MCF 10A (cell line): ENCODE measurements at regions of chr5 and their contacts with region 1.

Region 1: GRCh38 chr5:132238169-132238744 is 10.6 kb upstream of the P4HA2 start:
- DNase-seq: peak; percentile 80
- H3K4me3 Mint-ChIP-seq: no peak overlapping the region
- H3K27ac Mint-ChIP-seq: no peak overlapping the region
- H3K4me1 Mint-ChIP-seq: peaks cover under 1% of the 10 kb centered on the region
- H3K27me3 Mint-ChIP-seq: no peaks in the 10 kb centered on the region
- CTCF ChIP-seq: peak; percentile 96

Region 2: DNA sequence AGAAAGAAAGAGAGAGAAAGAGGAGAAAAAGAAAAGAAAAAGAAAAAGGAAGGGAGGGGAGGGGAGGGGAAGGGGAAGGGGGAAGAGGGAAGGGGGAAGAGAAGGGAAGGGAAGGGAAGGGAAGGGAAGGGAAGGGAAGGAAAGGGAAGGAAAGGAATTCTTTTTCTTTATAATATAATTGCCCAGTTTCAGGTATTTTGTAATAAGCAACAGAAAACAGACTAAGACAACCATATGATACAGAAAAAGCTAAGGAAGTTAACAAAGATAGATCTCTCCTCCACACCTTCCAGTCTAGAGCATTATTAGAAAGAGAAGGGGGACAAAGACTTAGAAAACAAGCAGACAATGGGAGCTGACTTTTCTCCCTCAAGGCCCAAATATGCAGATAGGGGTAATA is 323.8 kb before region 1 on chr5:
- CTCF ChIA-PET with region 1: no interaction called
- POLR2A ChIA-PET with region 1: no interaction called
- intact Hi-C with region 1: no loop called
- DNase-seq: no peak
- H3K4me3 Mint-ChIP-seq: no peak overlapping the region
- H3K27ac Mint-ChIP-seq: no peak overlapping the region
- H3K4me1 Mint-ChIP-seq: no peaks in the 10 kb centered on the region
- H3K27me3 Mint-ChIP-seq: peaks cover 87% of the 10 kb centered on the region
- CTCF ChIP-seq: no peak

Region 3: DNA sequence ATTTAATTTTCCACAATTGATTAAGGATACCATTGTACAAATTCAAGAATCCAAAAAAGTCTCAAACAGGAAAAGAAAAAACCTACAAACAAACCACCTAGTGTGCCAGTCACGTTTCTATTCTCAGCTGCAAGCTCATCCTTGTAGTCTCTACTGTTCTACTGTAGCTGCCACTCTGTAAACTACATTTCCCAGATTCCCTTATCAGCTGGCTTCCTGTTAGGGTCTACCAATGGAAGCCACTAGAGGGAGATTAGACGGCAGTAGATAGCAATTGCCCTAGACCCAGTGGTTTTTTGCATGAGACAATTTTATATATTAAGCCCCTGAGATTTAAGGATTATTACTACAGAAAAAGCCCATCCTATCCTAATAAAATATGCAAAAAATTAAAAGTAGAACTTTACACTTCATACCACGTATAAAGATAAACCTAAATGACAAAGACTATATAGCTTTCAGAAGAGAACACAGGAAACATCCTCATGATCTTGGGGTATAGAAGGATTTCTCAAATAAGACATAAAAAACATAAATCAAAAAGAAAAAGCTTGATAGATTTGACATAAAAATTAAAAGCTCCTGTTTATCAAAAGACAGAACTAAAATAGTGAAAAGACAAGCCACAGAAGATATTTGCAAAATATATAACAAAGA is 48.0 kb before region 1 on chr5:
- CTCF ChIA-PET with region 1: interaction called, 16 read pairs
- POLR2A ChIA-PET with region 1: interaction called, 4 read pairs
- intact Hi-C with region 1: no loop called
- DNase-seq: peak; percentile 85
- H3K4me3 Mint-ChIP-seq: no peak overlapping the region
- H3K27ac Mint-ChIP-seq: no peak overlapping the region
- H3K4me1 Mint-ChIP-seq: peaks cover 9% of the 10 kb centered on the region
- H3K27me3 Mint-ChIP-seq: no peaks in the 10 kb centered on the region
- CTCF ChIP-seq: peak; percentile 55

Region 4: DNA sequence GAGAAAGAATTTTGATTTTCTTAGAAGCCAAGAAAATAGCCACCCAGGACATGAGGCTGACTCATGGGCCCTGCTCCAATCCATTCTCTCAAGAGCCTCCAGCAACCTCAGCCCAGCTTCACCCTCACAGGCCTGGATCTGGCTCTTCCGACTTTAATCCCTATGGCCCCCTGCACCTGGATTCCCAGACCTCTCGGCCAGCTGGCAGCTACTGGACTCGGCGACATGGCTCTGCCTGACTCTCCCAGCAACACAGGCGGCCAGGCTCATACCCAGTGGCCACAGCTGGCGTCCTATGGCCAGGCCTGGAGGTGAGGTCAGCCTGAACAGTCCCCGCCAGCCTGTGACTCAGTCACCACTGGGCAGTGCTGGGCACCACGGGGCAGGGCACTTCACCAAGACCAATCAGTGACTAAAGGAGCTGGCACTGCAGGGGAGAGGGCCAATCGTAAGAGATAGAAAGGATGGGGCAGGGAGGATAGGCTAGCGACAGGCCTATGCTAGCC is 13.0 kb after region 1 on chr5:
- CTCF ChIA-PET with region 1: interaction called, 181 read pairs
- POLR2A ChIA-PET with region 1: interaction called, 8 read pairs
- intact Hi-C with region 1: no loop called
- DNase-seq: no peak
- H3K4me3 Mint-ChIP-seq: no peak overlapping the region
- H3K27ac Mint-ChIP-seq: peak overlapping the region; percentile 70
- H3K4me1 Mint-ChIP-seq: peaks cover 26% of the 10 kb centered on the region
- H3K27me3 Mint-ChIP-seq: no peaks in the 10 kb centered on the region
- CTCF ChIP-seq: no peak

Region 5: DNA sequence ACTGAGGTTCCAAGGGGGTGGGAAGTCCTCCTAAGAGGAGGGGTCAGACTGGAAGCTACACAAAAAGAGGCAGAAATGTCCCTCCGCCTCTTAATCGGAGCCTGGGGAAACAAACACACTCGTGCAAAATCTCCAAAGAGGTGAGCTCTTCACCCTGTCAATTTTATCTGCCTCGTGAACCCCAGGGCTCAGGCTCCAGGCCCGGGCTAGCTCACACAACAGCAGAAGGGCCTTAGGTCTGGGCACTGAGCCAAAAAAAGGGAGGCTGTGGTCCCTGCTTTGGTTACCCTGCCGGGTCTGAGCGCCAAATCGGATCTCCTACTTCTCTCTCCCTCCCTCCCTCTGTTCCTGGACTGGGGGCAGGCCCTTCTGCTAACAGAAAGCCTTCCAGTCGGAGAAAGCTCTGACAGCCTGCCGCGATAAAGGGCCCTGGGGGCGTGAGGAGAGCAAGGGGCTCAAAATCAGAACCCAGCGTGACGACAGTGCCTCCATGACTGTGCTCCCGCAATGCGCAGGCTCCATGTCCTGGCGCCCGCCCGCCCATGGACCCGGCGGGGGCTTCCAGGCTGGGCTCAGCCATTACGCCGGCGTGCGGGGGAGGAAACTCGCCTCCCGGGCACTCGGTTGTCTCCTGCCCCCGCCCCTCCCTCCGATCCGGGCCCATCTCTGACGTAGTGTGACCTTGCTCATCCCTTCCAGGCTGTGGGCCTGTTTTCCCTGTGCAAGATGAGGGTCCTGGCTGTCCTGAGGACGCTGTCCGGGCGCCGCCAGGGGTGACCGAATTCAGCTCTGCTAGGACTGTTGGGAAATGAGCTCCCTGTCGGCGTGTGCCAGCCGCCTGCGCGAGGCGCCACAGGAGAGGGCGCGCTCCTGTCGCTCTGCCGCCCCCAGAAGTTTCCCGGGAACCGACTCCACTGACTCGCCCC is 55.1 kb after region 1 on chr5:
- CTCF ChIA-PET with region 1: interaction called, 69 read pairs
- POLR2A ChIA-PET with region 1: interaction called, 17 read pairs
- intact Hi-C with region 1: loop called (anchors 1 kb)
- DNase-seq: peak; percentile 91
- H3K4me3 Mint-ChIP-seq: peak overlapping the region; percentile 98
- H3K27ac Mint-ChIP-seq: peak overlapping the region; percentile 89
- H3K4me1 Mint-ChIP-seq: peaks cover 40% of the 10 kb centered on the region
- H3K27me3 Mint-ChIP-seq: no peaks in the 10 kb centered on the region
- CTCF ChIP-seq: peak; percentile 19

Region 6: GRCh38 chr5:132354381-132355139 is 116.3 kb after region 1 on chr5:
- CTCF ChIA-PET with region 1: interaction called, 17 read pairs
- POLR2A ChIA-PET with region 1: no interaction called
- intact Hi-C with region 1: no loop called
- DNase-seq: no peak
- H3K4me3 Mint-ChIP-seq: no peak overlapping the region
- H3K27ac Mint-ChIP-seq: peak overlapping the region; percentile 0
- H3K4me1 Mint-ChIP-seq: peaks cover 21% of the 10 kb centered on the region
- H3K27me3 Mint-ChIP-seq: no peaks in the 10 kb centered on the region
- CTCF ChIP-seq: no peak

Region 7: GRCh38 chr5:132500931-132501630 is 262.8 kb after region 1 on chr5:
- CTCF ChIA-PET with region 1: interaction called, 54 read pairs
- POLR2A ChIA-PET with region 1: interaction called, 3 read pairs
- intact Hi-C with region 1: no loop called
- DNase-seq: peak; percentile 91
- H3K4me3 Mint-ChIP-seq: no peak overlapping the region
- H3K27ac Mint-ChIP-seq: peak overlapping the region; percentile 83
- H3K4me1 Mint-ChIP-seq: peaks cover 35% of the 10 kb centered on the region
- H3K27me3 Mint-ChIP-seq: no peaks in the 10 kb centered on the region
- CTCF ChIP-seq: peak; percentile 99

Region 8: GRCh38 chr5:132947671-132948070 is 709.4 kb after region 1 on chr5:
- CTCF ChIA-PET with region 1: no interaction called
- POLR2A ChIA-PET with region 1: no interaction called
- intact Hi-C with region 1: no loop called
- DNase-seq: peak; percentile 6
- H3K4me3 Mint-ChIP-seq: no peak overlapping the region
- H3K27ac Mint-ChIP-seq: no peak overlapping the region
- H3K4me1 Mint-ChIP-seq: peaks cover 33% of the 10 kb centered on the region
- H3K27me3 Mint-ChIP-seq: no peaks in the 10 kb centered on the region
- CTCF ChIP-seq: no peak